ENCODE measurements at regions of chr9 and their contacts with region 1.

Region 1: DNA sequence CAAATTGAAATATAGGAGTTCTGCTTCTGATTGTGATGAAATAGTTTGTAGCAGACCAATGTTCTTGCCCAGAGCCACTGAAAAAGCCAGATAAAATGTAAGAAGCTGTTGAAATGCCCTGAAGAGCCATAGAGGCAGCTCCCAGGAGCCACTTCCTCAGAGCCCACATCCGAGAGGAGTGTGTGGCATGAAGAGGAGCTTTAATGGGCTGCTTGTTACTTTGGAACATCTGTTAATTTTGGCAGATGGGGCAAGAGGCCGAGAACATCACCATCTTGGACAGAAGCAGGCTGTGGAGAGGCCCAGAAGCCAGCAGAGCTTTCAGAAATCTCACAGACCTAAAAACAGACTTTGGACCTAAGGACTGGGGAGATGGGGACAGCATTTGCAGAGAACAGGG is 370.8 kb downstream of the GADD45G start:
- DNase-seq: no peak
- H3K4me3 Mint-ChIP-seq: no peak overlapping the region
- H3K27ac Mint-ChIP-seq: no peak overlapping the region
- H3K4me1 Mint-ChIP-seq: peaks cover 10% of the 10 kb centered on the region
- H3K27me3 Mint-ChIP-seq: peaks cover 13% of the 10 kb centered on the region

Region 2: GRCh38 chr9:89999534-90000370 is 24.1 kb after region 1 on chr9:
- CTCF ChIA-PET with region 1: no interaction called
- POLR2A ChIA-PET with region 1: no interaction called
- DNase-seq: peak; percentile 83
- H3K4me3 Mint-ChIP-seq: peak overlapping the region; percentile 70
- H3K27ac Mint-ChIP-seq: peak overlapping the region; percentile 94
- H3K4me1 Mint-ChIP-seq: peaks cover 44% of the 10 kb centered on the region
- H3K27me3 Mint-ChIP-seq: no peaks in the 10 kb centered on the region

Region 3: GRCh38 chr9:90894986-90895687 is 919.5 kb after region 1 on chr9:
- CTCF ChIA-PET with region 1: no interaction called
- POLR2A ChIA-PET with region 1: interaction called, 12 read pairs
- DNase-seq: no peak
- H3K4me3 Mint-ChIP-seq: no peak overlapping the region
- H3K27ac Mint-ChIP-seq: no peak overlapping the region
- H3K4me1 Mint-ChIP-seq: no peaks in the 10 kb centered on the region
- H3K27me3 Mint-ChIP-seq: no peaks in the 10 kb centered on the region